Calu3 (cell line): ENCODE measurements at regions of chr2 and their contacts with region 1.

Region 1: DNA sequence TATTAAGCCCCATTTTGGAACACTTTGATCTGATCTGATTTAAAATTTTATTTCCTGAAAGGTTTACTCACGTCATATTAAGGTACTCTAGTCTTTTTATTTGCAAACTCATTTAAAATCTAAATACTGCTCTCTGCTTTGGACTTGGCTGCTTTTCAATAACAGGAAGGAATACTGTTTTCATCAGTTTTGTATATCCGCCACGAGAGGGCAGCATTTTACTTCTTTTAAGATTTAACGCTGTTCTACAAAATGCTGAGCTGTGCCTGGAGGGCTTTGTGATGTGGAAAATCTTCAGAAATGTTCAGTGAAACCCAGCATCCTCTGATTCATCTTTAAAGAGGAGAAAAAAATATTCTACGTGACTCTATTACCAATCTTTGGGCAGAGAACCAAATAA is 37.5 kb upstream of the SLC38A11 start:
- DNase-seq: peak; percentile 58
- H3K4me3 Mint-ChIP-seq: no peak overlapping the region
- H3K27ac Mint-ChIP-seq: no peak overlapping the region
- H3K4me1 Mint-ChIP-seq: peaks cover 22% of the 10 kb centered on the region
- H3K27me3 Mint-ChIP-seq: no peaks in the 10 kb centered on the region
- CTCF ChIP-seq: peak; percentile 49

Region 2: DNA sequence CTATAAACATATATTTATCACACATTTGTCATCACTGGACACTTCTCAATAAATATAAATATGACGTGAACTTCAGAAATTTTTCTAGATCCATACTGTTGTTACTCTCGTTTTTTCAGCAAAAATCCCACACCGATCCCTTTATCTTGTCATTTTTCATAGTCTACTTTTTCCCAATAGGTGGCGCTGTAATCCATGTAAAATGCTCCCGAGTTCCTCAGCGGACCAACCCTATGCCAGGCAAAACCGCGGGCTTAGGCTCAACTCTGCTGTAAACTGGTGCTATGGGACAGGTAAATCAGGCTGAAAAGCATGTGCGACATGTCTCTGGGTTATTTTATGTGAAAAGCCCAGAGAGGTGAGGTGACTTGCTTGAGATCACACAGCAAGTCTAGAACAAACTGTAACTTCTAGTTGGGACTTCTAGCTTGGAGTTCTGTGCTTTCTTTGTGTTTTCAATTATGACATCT is 255.2 kb before region 1 on chr2:
- CTCF ChIA-PET with region 1: no interaction called
- intact Hi-C with region 1: loop called (anchors 2 kb)
- DNase-seq: peak; percentile 63
- H3K4me3 Mint-ChIP-seq: no peak overlapping the region
- H3K27ac Mint-ChIP-seq: peak overlapping the region; percentile 26
- H3K4me1 Mint-ChIP-seq: peaks cover 68% of the 10 kb centered on the region
- H3K27me3 Mint-ChIP-seq: no peaks in the 10 kb centered on the region
- CTCF ChIP-seq: peak; percentile 77

Region 3: GRCh38 chr2:165015052-165015642 is 22.3 kb after region 1 on chr2:
- CTCF ChIA-PET with region 1: interaction called, 10 read pairs
- intact Hi-C with region 1: no loop called
- DNase-seq: peak; percentile 80
- H3K4me3 Mint-ChIP-seq: no peak overlapping the region
- H3K27ac Mint-ChIP-seq: no peak overlapping the region
- H3K4me1 Mint-ChIP-seq: peaks cover 9% of the 10 kb centered on the region
- H3K27me3 Mint-ChIP-seq: no peaks in the 10 kb centered on the region
- CTCF ChIP-seq: peak; percentile 88

Region 4: GRCh38 chr2:165044505-165045303 is 51.9 kb after region 1 on chr2:
- CTCF ChIA-PET with region 1: no interaction called
- intact Hi-C with region 1: no loop called
- DNase-seq: no peak
- H3K4me3 Mint-ChIP-seq: no peak overlapping the region
- H3K27ac Mint-ChIP-seq: no peak overlapping the region
- H3K4me1 Mint-ChIP-seq: no peaks in the 10 kb centered on the region
- H3K27me3 Mint-ChIP-seq: peaks cover 22% of the 10 kb centered on the region
- CTCF ChIP-seq: no peak

Region 5: DNA sequence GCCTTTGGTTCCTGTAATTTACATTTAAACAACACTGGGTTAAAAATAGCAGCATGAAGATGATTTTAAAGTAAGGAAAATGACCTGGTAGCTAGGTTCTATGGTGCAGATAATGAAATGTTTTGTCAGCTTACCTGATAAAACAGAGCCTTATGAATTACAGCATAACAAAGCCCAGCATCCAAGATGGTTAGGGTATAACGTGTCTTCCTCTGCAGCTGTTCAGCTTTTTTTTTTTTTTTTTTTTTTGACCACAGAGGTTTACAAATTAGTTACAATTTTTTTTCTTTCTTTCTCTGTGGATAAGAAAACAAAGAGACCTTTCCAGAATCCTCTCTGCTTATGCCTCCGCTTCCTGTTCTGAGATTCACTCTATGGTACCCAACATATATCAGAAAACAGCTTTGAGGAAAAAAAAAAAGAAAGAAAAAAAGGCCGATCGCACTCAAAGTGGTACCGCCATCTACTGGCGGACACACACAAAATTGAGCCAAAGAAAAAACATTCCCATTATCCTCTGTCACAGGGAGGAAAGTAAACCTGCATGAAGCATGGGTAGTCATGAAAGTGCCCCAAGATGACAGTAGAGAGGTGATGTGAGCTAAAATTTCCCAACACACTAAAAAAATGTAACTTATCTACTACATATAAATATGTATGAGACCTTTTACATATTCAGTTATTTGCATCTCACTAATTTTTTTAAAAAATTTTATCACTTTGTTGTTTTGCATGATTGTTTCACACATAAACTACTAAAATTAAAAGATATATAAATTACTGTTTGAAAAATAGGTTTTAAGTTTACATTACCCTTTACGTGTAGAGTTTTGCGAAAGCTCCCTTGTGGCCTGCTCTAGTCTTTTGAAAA is 211.1 kb after region 1 on chr2 and contains the start of gene SCN3A:
- CTCF ChIA-PET with region 1: interaction called, 17 read pairs
- intact Hi-C with region 1: loop called (anchors 5 kb)
- DNase-seq: peak; percentile 49
- H3K4me3 Mint-ChIP-seq: no peak within 1 kb of the TSS
- H3K27ac Mint-ChIP-seq: no peak within 1 kb of the TSS
- H3K4me1 Mint-ChIP-seq: peaks cover 12% of the 10 kb centered on the region
- H3K27me3 Mint-ChIP-seq: no peaks in the 10 kb centered on the region
- CTCF ChIP-seq: peak; percentile 61
- total RNA-seq, gene SCN3A: 0.09 and 1.3 TPM in 2 replicates

Region 6: GRCh38 chr2:165293440-165294353 is 300.9 kb after region 1 on chr2:
- CTCF ChIA-PET with region 1: no interaction called
- intact Hi-C with region 1: loop called (anchors 5 kb)
- DNase-seq: peak; percentile 71
- H3K4me3 Mint-ChIP-seq: no peak overlapping the region
- H3K27ac Mint-ChIP-seq: no peak overlapping the region
- H3K4me1 Mint-ChIP-seq: no peaks in the 10 kb centered on the region
- H3K27me3 Mint-ChIP-seq: no peaks in the 10 kb centered on the region
- CTCF ChIP-seq: peak; percentile 48

Region 7: DNA sequence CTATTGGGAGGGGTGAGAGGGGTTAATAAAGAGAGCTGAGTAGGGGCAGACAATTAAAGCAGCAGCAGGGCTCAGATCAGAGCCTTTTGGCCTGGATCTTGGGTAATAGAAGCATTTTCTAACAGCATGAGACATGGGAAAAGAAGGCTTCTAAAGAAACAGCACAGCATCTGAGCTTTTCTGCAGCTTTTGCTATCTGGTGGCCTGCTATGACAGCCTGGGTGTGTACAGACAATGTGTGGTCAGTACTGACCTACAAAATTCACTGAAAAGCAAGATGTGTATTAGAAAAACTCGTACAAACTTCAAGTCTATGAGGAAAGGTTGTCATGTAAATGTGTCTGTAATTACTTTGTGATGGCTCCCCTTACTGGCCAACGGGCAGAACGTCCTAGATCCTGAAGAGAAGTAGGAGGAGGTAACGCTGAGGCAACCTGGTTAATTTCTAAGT is 705.7 kb after region 1 on chr2:
- CTCF ChIA-PET with region 1: no interaction called
- intact Hi-C with region 1: loop called (anchors 5 kb)
- DNase-seq: peak; percentile 38
- H3K4me3 Mint-ChIP-seq: no peak overlapping the region
- H3K27ac Mint-ChIP-seq: no peak overlapping the region
- H3K4me1 Mint-ChIP-seq: no peaks in the 10 kb centered on the region
- H3K27me3 Mint-ChIP-seq: peaks cover 12% of the 10 kb centered on the region
- CTCF ChIP-seq: no peak